ENCODE measurements at regions of chr14 and their contacts with region 1.

Region 1: DNA sequence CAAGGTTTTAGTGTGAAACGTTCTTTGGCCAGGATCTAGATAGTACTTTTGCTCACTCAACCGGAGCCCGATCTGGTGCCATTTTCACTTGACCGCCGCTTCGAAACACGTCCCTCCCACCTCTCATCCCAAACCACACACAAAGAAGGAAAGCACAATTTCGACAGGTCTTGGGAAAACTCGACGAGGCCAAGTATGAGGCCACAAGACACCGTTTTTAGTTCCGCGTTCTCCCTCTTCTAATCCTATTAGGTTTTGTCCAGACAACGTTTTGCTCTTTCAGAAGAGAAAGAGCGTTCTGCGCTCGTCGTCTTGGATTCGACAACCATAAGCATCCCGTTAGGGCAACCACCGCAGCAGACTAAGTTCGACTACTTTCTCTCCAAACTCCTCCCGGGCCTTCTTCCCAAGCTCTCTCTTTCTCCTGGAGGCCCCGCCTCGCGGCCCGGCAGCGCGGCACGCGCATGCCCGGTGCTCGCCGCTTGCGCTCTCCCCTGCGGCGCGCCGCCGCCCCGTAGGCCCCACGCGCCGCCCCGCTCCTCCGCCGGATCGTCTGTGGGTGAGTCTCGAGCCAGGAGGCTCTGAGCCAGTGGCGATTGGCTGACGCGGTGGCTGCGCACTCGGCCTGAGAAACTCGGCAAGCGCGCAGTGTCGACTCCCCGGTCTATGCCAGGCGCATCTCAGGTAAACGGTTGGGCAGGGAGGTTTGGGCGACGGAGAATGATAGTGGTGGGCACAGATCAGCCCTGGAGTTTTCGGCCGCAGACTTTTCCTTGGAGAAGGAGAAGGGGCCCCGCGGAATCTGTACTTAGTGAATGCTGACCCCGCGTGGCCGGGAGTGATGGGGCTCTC is at the start of gene MIPOL1:
- DNase-seq: peak; percentile 84 to 90 (median 85)
- ATAC-seq: peak; percentile 93
- H3K4me3 ChIP-seq: peak within 1 kb of the TSS; percentile 50
- H3K27ac ChIP-seq: peak within 1 kb of the TSS; percentile 96
- H3K4me1 ChIP-seq: peaks cover 6 to 8% of the 10 kb centered on the region in 2 experiments; a peak in 4 of 5 replicates
- H3K27me3 ChIP-seq: no peaks in the 10 kb centered on the region
- CTCF ChIP-seq: peak; percentile 66 to 71 (median 70)
- EP300 ChIP-seq: no peak
- POLR2A ChIP-seq: peak; percentile 83
- RAD21 ChIP-seq: peak; percentile 72 to 78
- polyA plus RNA-seq, gene MIPOL1: 6.7 to 9.5 TPM

Region 2: DNA sequence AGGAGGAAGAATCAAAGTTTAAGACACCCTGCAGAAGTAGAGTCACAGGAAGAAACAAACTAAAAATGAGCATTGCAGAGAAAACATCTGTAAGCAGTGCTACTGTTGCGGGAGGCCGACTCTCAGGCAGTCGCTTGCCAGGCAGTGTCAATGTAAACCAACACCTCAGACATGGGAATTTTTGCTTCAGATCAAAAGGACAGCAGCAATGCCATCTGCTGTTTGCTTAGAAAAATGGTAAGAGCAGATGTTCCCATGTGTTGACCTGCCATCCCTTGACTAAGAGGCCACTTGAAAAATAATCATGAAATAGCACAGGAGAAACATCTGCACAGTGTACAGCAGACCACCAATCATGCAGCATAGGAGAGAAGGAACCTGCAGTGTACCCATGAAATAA is 221.8 kb before region 1 on chr14:
- CTCF ChIA-PET with region 1: no interaction called
- POLR2A ChIA-PET with region 1: no interaction called
- in situ Hi-C with region 1: no loop called
- intact Hi-C with region 1: loop called (anchors 10 kb)
- DNase-seq: peak in 1 of 4 experiments; percentile 41
- ATAC-seq: peak; percentile 45; the same call in 2 of the 3 replicates
- H3K4me3 ChIP-seq: no peak overlapping the region
- H3K27ac ChIP-seq: peak overlapping the region; percentile 88
- H3K4me1 ChIP-seq: peaks cover 0 to 49% of the 10 kb centered on the region in 2 experiments; a peak in 4 of 5 replicates
- H3K27me3 ChIP-seq: no peaks in the 10 kb centered on the region
- CTCF ChIP-seq: peak; percentile 16 to 42 (median 24); a peak in 3 of 6 replicates
- EP300 ChIP-seq: no peak
- POLR2A ChIP-seq: no peak
- RAD21 ChIP-seq: peak; percentile 16 to 49; a peak in 3 of 4 replicates

Region 3: DNA sequence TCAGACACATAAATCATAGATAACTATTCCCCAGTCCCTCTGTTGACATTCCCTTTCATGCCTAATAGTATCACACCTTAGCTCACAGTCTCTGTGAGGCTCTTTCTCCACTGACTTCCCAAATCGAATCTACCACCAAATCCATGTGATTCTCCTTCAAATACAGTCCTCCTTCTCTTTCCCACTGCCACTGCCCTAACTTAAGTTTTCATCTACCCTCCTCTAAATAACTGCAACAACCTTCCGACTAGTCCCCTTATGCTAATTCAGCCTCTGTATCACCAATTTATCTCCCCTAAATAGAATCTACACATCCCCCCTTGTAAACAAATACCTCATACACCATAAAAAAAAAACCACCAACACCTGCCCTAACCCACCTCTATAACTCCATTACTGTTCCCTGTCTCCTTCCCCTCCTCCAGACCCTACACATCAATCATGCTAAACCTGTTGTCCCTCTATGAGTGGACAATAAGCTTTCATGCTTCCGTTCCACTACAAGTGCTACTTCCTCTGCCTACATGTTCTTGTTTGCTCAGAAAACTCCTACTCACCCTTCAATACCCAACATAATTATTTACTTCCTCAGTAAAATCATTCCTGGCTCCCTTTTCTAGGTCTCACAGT is 64.2 kb before region 1 on chr14:
- CTCF ChIA-PET with region 1: no interaction called
- POLR2A ChIA-PET with region 1: no interaction called
- in situ Hi-C with region 1: no loop called
- intact Hi-C with region 1: no loop called
- DNase-seq: no peak
- ATAC-seq: no peak
- H3K4me3 ChIP-seq: no peak overlapping the region
- H3K27ac ChIP-seq: no peak overlapping the region
- H3K4me1 ChIP-seq: no peaks in the 10 kb centered on the region; a peak in 2 of 5 replicates
- H3K27me3 ChIP-seq: no peaks in the 10 kb centered on the region
- CTCF ChIP-seq: no peak
- EP300 ChIP-seq: no peak
- POLR2A ChIP-seq: no peak
- RAD21 ChIP-seq: no peak

Region 4: DNA sequence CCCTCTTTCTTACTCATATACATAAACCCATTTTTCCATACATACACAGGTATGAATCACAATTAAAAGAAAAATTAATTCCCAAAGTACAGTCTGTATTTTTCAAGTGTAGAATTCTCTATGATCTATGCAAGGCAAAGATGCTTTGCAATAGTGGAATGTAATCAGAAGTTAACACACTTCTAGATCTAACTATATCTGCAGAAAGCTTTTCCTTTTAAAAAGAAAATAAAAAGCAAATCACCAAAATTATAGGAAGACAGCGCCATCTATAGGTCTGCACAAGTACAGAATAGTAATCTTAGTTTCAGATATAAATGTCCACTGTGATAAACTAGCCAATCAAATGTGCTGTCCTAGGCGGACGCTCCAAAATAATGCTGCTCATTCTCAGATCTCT is 47.2 kb before region 1 on chr14:
- CTCF ChIA-PET with region 1: interaction called, 10 read pairs
- POLR2A ChIA-PET with region 1: no interaction called
- in situ Hi-C with region 1: no loop called
- intact Hi-C with region 1: loop called (anchors 5 kb)
- DNase-seq: peak in 2 of 4 experiments; percentile 46 to 47
- ATAC-seq: peak; percentile 69
- H3K4me3 ChIP-seq: no peak overlapping the region
- H3K27ac ChIP-seq: no peak overlapping the region
- H3K4me1 ChIP-seq: peaks cover 5 to 8% of the 10 kb centered on the region in 2 experiments; a peak in 3 of 5 replicates
- H3K27me3 ChIP-seq: no peaks in the 10 kb centered on the region
- CTCF ChIP-seq: peak; percentile 43 to 71 (median 52); a peak in 4 of 6 replicates
- EP300 ChIP-seq: no peak
- POLR2A ChIP-seq: no peak
- RAD21 ChIP-seq: peak in 1 of 2 experiments; percentile 64; a peak in 3 of 4 replicates

Region 5: DNA sequence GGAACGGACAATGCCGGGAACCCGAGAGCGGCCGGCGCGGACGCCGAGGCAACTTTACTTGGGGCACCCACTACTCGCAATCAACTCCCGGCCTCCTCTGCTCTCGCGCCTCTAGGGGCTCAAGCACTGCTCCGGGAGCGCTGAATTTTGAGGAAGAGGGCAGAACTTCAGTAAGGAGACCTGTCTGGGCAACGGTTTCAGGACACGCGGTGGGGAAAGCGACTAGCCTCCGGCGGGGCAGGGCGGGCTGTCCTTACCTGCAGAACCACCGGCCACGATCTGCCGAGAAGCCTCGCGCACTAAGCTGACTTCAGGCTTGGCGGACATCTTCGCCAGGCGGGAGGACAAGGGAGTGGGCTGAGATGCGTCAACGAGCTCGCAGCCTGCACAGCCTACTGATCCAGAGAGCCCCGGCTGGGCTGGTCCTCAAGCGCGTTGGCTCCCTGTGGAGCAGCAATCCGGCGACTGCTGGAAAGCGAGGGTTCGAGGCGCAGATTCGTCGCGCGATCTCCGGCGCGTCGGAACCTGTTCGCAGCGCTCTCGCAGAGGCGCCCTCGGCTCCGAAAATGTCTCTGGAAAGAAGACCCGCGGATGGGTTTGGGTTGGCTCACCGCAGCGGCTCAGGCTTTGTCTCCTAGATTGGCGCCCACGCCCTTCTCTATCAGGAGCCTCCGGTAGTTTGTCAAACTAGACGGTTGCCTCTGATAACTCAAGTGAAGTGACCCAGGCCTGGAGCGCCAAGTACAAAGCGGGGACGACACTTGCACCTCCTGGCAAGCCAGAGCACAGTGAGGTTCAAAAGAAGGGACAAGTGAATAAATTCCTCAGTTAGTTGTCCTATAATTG is 25.4 kb before region 1 on chr14 and contains the start of gene SLC25A21:
- CTCF ChIA-PET with region 1: interaction called, 3 read pairs
- POLR2A ChIA-PET with region 1: interaction called, 10 read pairs
- in situ Hi-C with region 1: no loop called
- intact Hi-C with region 1: loop called (anchors 1 kb)
- DNase-seq: peak; percentile 51 to 87 (median 58)
- ATAC-seq: peak; percentile 74
- H3K4me3 ChIP-seq: peak within 1 kb of the TSS; percentile 75
- H3K27ac ChIP-seq: peak within 1 kb of the TSS; percentile 94
- H3K4me1 ChIP-seq: peaks cover 11 to 33% of the 10 kb centered on the region in 2 experiments
- H3K27me3 ChIP-seq: no peaks in the 10 kb centered on the region
- CTCF ChIP-seq: 0 out of 6 replicates have a peak, but pooled peaks of 1 of the 3 experiments have one; percentile 6
- EP300 ChIP-seq: peak; percentile 34; the same call in 1 of the 2 replicates
- POLR2A ChIP-seq: peak; percentile 85
- RAD21 ChIP-seq: no peak
- polyA plus RNA-seq, gene SLC25A21: 44.6 to 46.7 TPM

Measured in K562 (cell line).